HepG2 (cell line): ENCODE measurements at regions of chr11 and their contacts with region 1.

Region 1: DNA sequence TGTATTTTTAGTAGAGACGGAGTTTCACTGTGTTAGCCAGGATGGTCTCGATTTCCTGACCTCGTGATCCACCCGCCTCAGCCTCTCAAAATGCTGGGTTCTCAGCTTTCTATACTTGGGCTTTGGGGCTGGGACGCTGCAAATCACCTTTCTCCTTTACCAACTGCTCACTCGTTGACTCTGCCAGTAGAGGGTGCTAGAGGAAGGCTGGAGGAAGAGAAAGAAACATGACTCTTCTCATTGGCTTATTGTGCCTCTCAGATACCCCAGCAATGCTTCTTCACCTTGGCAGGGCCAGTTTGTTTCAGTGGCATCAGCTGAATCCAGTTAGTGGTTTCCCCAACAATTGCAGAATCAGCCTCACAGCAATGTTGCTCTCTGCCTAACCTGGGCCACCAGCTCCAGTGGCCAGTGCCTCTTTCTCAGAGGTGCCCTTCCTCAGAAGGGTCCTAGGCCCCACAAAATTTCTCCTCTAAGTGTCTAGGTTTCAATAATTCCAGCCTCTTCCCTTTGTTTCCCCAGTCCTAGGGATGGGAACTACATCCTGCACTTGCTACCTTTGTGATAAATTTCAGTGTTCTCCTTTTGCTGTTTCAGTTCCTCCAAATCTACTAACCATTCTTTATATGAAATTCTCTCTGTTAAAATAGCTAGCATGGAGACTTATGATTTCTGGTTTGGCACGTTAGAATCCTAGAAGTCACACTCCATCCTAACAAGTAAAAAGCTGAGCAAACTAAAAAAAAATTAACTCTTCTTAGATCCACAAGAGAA is 71.5 kb upstream of the VSTM5 start:
- DNase-seq: peak; percentile 56
- ATAC-seq: peak; percentile 85
- H3K4me3 ChIP-seq: no peak overlapping the region
- H3K27ac ChIP-seq: no peak overlapping the region
- H3K4me1 ChIP-seq: peaks cover 19% of the 10 kb centered on the region
- H3K27me3 ChIP-seq: no peaks in the 10 kb centered on the region
- CTCF ChIP-seq: peak; percentile 87
- EP300 ChIP-seq: no peak
- POLR2A ChIP-seq: no peak
- RAD21 ChIP-seq: peak; percentile 76

Region 2: GRCh38 chr11:93905384-93905783 is 16.5 kb before region 1 on chr11:
- CTCF ChIA-PET with region 1: no interaction called
- POLR2A ChIA-PET with region 1: no interaction called
- in situ Hi-C with region 1: no loop called
- intact Hi-C with region 1: no loop called
- DNase-seq: peak; percentile 33
- ATAC-seq: peak; percentile 38; the same call in 2 of the 3 replicates
- H3K4me3 ChIP-seq: no peak overlapping the region
- H3K27ac ChIP-seq: no peak overlapping the region
- H3K4me1 ChIP-seq: no peaks in the 10 kb centered on the region; the same call in 1 of the 2 replicates
- H3K27me3 ChIP-seq: no peaks in the 10 kb centered on the region; a peak in 1 of 5 replicates
- CTCF ChIP-seq: no peak
- EP300 ChIP-seq: no peak
- POLR2A ChIP-seq: no peak
- RAD21 ChIP-seq: no peak

Region 3: DNA sequence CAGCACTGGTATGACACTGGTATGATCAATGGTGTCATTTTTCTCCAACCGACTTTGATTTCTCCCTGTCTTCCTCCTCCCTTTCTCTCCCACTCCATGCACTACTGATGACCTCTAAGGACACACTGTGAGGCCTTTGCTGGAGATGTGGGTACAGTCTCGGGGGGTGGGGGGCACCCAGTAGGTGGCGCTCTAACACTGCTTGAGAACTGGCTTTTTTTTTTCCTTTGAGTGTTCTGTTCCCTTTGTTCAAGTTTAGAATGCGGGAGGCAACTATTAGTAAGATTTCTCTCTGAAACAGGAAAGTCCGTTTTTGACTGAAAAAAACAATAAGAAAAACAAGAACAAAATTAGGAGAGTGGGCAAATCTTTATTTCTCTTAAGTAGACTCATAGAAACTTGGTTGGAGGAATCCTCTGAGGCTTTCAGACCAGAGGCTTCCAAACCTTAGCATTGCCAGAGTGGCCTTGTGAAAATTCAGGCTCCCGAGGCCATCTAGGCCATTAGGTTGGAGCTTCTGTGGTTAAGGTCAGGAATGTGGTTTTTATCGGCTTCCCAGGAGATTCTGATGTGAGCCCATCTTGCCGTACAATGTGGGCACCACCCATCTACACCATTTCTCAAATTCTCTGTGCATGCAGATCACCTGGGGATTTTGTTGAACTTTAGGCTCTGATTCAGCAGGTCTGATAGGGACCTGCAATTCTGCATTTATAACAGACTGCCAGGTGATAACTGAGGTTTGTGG is 250.0 kb after region 1 on chr11:
- CTCF ChIA-PET with region 1: no interaction called
- POLR2A ChIA-PET with region 1: no interaction called
- in situ Hi-C with region 1: no loop called
- intact Hi-C with region 1: loop called (anchors 1 kb)
- DNase-seq: peak; percentile 31
- ATAC-seq: peak; percentile 96
- H3K4me3 ChIP-seq: no peak overlapping the region
- H3K27ac ChIP-seq: no peak overlapping the region
- H3K4me1 ChIP-seq: no peaks in the 10 kb centered on the region
- H3K27me3 ChIP-seq: no peaks in the 10 kb centered on the region
- CTCF ChIP-seq: peak; percentile 78
- EP300 ChIP-seq: no peak
- POLR2A ChIP-seq: no peak
- RAD21 ChIP-seq: no peak